Natural killer cell (primary cell): ENCODE measurements at regions of chr7 and their contacts with region 1.

Region 1: DNA sequence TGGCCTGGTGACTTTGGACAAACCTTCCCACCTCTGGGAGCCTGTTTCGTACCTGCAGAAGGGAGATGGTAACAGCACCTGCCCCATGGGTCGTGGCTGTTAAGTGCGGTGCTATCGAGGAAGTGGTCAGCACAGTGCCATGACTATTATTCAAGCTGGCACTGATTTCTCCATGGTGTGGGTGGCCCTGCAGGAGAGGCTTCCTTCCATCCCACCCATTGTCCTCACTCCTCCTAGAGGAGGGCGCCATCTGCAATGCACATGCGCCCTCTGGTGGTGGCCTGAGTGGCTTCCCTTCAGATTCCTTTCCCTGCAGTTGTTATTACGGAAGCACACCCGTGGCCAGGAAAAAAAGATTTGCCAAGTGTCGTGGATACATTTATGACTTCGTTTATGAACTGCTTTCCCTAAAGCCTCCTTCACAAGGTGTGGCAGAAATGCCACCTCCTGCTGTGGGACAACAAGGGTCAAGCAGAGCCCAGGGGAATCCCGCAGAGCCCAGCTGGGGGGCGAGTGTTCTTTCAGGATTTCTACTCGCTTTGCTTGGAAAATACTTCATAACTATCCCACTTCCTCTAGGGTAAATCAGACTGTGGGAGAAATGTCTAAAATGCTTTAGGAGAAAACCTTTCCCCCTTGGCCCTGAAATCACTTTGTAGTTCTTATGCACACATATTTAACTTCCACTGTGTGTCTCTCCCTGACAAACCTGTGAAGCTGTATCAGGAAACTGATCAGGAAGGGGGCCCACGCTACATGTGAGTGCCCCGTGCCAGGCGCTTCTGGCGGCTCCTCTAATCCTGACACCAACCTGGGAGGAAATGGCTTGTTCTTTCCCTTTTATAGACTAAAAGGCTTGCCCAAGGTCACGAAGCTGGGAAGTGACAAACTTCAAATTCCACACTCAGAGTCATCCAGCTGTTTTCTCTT is 98.0 kb upstream of the ANLN start:
- DNase-seq: peak; percentile 63 to 90
- ATAC-seq: peak; percentile 68 to 79 (median 70)
- H3K4me3 ChIP-seq: no peak overlapping the region
- H3K4me3 Mint-ChIP-seq: peak overlapping the region; percentile 21
- H3K27ac ChIP-seq: no peak overlapping the region
- H3K27ac Mint-ChIP-seq: no peak overlapping the region
- H3K4me1 ChIP-seq: peaks cover 29% of the 10 kb centered on the region
- H3K4me1 Mint-ChIP-seq: peaks cover 21 to 23% of the 10 kb centered on the region in 2 donors
- H3K27me3 ChIP-seq: no peaks in the 10 kb centered on the region
- H3K27me3 Mint-ChIP-seq: peaks cover 7 to 9% of the 10 kb centered on the region in 2 donors
- CTCF ChIP-seq: peak; percentile 96

Region 2: DNA sequence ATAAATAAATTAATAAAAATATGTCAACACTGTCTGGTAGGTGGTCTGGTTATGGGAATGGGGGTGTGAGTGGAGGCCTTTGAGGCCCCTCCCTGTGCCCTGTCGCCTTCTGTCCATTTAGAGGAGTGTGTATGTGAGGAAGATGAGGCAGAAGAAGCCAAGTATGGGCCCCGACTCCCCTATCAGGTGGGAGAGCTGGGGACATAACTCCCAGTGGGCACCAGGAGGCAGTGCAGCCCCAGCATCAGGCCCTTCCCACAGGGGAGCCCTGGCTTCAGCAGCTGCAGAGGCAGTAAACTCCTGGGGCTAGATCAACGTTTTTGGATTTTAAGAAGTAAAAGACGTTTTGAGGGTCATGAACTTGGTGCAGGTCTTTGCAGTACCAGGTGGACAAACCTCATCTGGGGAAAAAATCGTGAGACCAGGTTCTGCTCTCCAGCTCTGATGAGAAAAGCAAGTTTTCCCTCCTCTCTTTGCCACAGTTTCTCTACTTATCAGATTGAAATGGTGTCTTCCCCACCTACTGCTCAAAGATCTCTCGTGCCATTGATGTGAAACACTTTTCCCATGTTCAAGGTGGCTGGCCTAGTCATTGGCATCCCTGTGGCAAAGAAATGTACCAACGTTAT is 306.4 kb before region 1 on chr7:
- intact Hi-C with region 1: loop called (anchors 1 kb)
- DNase-seq: peak; percentile 41 to 88
- ATAC-seq: peak; percentile 78 to 94 (median 81)
- H3K4me3 ChIP-seq: no peak overlapping the region
- H3K4me3 Mint-ChIP-seq: no peak overlapping the region
- H3K27ac ChIP-seq: no peak overlapping the region
- H3K27ac Mint-ChIP-seq: no peak overlapping the region
- H3K4me1 ChIP-seq: no peaks in the 10 kb centered on the region
- H3K4me1 Mint-ChIP-seq: no peaks in the 10 kb centered on the region
- H3K27me3 ChIP-seq: no peaks in the 10 kb centered on the region
- H3K27me3 Mint-ChIP-seq: peaks cover 0 to 3% of the 10 kb centered on the region in 2 donors
- CTCF ChIP-seq: peak; percentile 62

Region 3: DNA sequence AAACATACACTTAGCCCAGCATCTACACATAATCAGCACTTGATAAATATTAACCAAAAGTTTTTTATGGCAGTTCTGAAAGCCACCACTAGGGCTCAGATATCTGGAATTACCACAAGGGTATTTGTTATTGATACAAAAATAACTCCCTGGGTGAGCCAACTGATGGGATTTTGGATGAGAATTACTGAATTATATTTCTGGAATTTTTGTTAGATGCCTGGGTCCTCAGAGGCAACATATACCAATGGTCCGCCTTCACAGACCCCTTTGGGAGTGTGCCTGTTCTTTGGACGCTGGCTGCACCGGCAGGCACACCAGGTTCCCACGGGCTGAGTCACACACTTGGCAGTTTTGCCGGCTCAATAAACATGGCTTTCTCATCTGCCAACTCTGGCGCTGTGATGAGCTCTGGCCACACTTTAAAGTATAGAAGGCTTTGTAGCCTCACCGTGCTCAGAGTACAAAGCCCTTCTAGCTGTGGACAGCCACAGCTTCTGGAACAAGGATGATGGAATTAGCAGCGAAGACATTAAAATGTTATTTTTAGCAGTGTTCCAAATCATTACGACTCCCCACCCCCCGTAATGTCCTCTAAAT is 163.1 kb before region 1 on chr7:
- intact Hi-C with region 1: loop called (anchors 1 kb)
- DNase-seq: no peak
- ATAC-seq: no peak
- H3K4me3 ChIP-seq: no peak overlapping the region
- H3K4me3 Mint-ChIP-seq: no peak overlapping the region
- H3K27ac ChIP-seq: no peak overlapping the region
- H3K27ac Mint-ChIP-seq: no peak overlapping the region
- H3K4me1 ChIP-seq: no peaks in the 10 kb centered on the region
- H3K4me1 Mint-ChIP-seq: no peaks in the 10 kb centered on the region
- H3K27me3 ChIP-seq: no peaks in the 10 kb centered on the region
- H3K27me3 Mint-ChIP-seq: peaks cover 2 to 8% of the 10 kb centered on the region in 2 donors
- CTCF ChIP-seq: peak; percentile 48

Region 4: GRCh38 chr7:36227223-36227622 is 64.4 kb before region 1 on chr7:
- intact Hi-C with region 1: no loop called
- DNase-seq: no peak
- ATAC-seq: no peak
- H3K4me3 ChIP-seq: no peak overlapping the region
- H3K4me3 Mint-ChIP-seq: no peak overlapping the region
- H3K27ac ChIP-seq: no peak overlapping the region
- H3K27ac Mint-ChIP-seq: no peak overlapping the region
- H3K4me1 ChIP-seq: no peaks in the 10 kb centered on the region
- H3K4me1 Mint-ChIP-seq: no peaks in the 10 kb centered on the region
- H3K27me3 ChIP-seq: no peaks in the 10 kb centered on the region
- H3K27me3 Mint-ChIP-seq: peaks cover 0 to 5% of the 10 kb centered on the region in 2 donors
- CTCF ChIP-seq: no peak